ENCODE measurements at regions of chr9 and their contacts with region 1.

Region 1: DNA sequence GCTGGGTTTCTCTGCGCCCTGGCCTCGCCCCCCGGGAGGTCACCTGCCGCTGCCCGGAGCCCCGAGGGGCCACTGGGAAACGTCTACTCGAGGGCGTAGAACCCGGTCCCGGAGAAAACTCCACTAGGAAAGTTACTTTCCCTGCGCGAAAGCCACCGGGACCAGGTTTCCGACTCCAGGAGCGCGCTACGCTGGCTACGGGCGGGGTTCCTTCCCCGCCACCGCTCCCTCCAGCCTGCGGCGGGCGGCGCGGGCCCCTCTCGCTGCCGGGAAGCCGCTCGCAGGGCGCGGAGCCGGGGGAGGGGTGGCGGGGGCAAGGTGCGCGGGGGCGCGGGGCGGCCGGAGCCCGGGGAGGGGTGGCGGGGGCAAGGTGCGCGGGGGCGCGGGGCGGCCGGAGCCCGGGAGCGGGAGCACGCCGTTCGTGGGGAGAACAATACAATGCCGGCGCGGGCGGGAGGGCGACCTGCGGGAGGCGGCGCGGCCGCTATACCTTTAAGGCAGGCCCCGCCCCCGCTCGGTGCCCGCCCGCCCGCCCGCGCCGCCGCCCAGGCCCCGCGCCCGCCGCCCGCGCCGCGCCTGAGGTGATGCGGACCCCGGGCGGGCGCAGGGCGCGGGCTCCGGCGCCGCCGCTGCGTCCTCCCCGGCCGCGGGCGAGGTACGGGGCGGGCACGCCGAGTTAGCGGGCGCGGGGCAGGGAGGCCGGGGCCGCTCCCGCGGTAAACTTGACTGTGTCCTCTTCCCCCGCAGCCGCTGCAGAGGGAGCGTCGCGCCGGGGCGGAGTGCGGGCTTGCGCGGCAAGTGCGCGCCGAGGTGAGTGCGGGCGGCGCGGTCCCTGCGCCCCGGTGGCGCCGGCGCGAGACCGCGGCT is 278.1 kb downstream of the AOPEP start:
- DNase-seq: peak; percentile 36
- H3K4me3 Mint-ChIP-seq: peak overlapping the region; percentile 82
- H3K27ac Mint-ChIP-seq: no peak overlapping the region
- H3K4me1 Mint-ChIP-seq: peaks cover 36% of the 10 kb centered on the region
- H3K27me3 Mint-ChIP-seq: peaks cover 29% of the 10 kb centered on the region

Region 2: GRCh38 chr9:94783102-94783664 is 221.5 kb before region 1 on chr9:
- intact Hi-C with region 1: loop called (anchors 2 kb)
- DNase-seq: peak; percentile 10
- H3K4me3 Mint-ChIP-seq: no peak overlapping the region
- H3K27ac Mint-ChIP-seq: no peak overlapping the region
- H3K4me1 Mint-ChIP-seq: peaks cover 17% of the 10 kb centered on the region
- H3K27me3 Mint-ChIP-seq: no peaks in the 10 kb centered on the region

Region 3: GRCh38 chr9:94802793-94803192 is 201.9 kb before region 1 on chr9:
- intact Hi-C with region 1: loop called (anchors 5 kb)
- DNase-seq: no peak
- H3K4me3 Mint-ChIP-seq: no peak overlapping the region
- H3K27ac Mint-ChIP-seq: no peak overlapping the region
- H3K4me1 Mint-ChIP-seq: peaks cover 22% of the 10 kb centered on the region
- H3K27me3 Mint-ChIP-seq: peaks cover 2% of the 10 kb centered on the region

Region 4: DNA sequence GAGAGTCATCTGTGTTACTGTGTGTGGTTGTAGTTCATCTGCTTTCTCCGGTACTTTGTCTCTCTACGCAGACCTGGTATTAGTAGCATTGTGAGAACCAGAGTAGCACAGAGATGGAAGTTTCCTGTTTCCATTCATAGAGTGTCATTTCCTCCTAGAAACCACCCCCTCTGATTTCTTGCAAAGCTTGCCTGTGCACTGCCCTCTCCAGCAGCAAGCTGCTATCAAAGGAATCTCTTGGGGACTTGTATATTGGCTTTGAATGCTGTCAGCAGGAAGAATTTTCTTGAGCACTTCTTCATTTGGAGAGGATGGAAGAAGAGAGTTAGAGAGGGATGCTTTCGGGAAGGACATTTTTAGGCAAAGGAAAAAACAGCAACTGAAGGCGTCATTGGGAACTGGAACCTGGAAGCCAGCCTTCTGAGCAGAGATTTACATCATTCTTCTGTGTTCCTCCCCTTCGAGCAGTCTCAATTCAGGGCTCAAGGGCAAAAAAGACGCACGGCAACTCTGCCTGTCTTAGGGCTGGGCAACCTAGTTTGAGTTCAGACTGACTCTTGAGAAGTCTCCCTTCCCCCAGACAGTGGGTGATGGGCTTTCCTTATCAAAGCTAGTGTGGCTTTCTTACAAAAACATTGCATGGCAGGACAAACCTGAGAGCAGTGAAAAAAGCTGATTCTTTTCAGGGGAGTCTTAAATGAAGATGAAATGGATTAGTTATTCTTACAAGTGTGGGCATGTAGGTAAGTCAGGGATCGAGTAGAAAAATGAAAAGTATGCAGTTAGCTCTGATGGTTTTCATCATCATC is 51.9 kb before region 1 on chr9:
- intact Hi-C with region 1: loop called (anchors 1 kb)
- DNase-seq: no peak
- H3K4me3 Mint-ChIP-seq: no peak overlapping the region
- H3K27ac Mint-ChIP-seq: no peak overlapping the region
- H3K4me1 Mint-ChIP-seq: peaks cover 31% of the 10 kb centered on the region
- H3K27me3 Mint-ChIP-seq: no peaks in the 10 kb centered on the region

Region 5: DNA sequence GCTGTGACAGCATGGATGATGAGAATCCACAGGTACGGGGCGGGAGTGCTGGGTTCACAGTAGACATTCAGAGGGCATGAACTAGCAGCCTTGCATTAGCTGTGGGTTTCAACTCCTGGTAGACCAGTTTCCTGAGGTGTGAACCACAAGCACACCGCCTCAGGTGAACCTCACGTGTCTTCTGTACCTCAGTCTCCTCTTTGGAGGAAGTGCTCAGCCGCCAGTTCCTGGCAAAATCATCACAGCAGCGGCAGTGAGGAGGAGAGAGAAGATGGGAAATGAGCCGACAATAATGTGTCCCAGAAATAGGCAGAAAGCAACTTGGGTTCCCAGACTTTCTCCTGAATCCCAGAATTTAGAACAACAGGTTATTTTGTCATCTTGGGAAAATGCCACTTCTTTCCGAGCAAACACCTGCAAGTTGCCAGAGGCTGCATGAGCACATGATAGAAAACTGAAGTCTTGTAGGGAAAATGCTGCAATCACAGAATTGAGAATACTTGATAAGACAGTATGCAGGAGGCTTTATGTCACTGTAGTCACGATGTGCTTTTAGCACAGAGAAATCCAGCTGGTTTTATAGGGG is 19.7 kb before region 1 on chr9:
- intact Hi-C with region 1: no loop called
- DNase-seq: no peak
- H3K4me3 Mint-ChIP-seq: no peak overlapping the region
- H3K27ac Mint-ChIP-seq: no peak overlapping the region
- H3K4me1 Mint-ChIP-seq: peaks cover 3% of the 10 kb centered on the region
- H3K27me3 Mint-ChIP-seq: no peaks in the 10 kb centered on the region

Region 6: DNA sequence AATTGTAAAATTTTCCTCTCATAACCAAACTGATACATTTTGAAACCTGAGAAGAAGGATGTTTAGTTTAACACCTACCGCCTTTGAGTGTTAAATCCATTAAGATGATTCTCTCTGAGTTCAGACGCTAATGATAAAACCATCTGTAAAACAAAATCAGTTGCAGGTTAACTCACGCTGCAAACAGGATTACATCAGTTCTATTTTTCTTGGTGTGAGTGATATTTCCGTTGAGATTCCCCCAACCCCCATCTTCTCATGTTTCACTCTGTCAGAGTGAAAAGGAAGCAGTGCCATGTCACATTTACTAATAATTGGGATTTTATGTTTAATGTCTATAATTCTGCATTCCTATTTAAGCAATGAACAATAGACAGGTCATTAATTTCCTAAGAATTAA is 166.4 kb after region 1 on chr9:
- intact Hi-C with region 1: loop called (anchors 2 kb)
- DNase-seq: no peak
- H3K4me3 Mint-ChIP-seq: peak overlapping the region; percentile 48
- H3K27ac Mint-ChIP-seq: peak overlapping the region; percentile 63
- H3K4me1 Mint-ChIP-seq: peaks cover 36% of the 10 kb centered on the region
- H3K27me3 Mint-ChIP-seq: no peaks in the 10 kb centered on the region